ENCODE measurements at regions of chr1 and their contacts with region 1.

Region 1: DNA sequence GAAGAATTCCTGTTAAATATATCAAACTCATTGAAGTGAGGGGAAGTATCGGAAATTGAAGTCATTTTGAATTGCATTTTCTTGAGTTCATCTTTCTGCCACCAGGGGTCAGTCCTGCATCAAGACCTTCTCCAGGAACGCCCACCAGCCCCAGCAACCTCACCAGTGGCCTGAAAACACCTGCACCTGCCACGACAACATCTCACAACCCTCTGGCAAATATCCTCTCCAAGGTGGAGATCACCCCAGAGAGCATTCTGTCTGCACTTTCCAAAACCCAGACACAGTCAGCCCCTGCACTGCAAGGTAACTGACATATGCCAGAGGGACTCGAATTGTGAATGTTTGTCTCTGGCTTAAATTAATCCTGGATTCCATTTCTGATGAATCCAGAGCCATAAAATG is 22.8 kb upstream of the TARS2 start:
- DNase-seq: peak; percentile 42
- H3K4me3 ChIP-seq: no peak overlapping the region
- H3K27ac ChIP-seq: no peak overlapping the region
- H3K4me1 ChIP-seq: peaks cover 10% of the 10 kb centered on the region
- H3K27me3 ChIP-seq: no peaks in the 10 kb centered on the region
- CTCF ChIP-seq: peak; percentile 76 to 77

Region 2: GRCh38 chr1:150259758-150260669 is 204.4 kb before region 1 on chr1:
- CTCF ChIA-PET with region 1: no interaction called
- dilution Hi-C with region 1: no loop called
- in situ Hi-C with region 1: no loop called
- intact Hi-C with region 1: loop called (anchors 10 kb)
- DNase-seq: peak; percentile 56
- H3K4me3 ChIP-seq: peak overlapping the region in 2 of 3 experiments; percentile 2 to 11
- H3K27ac ChIP-seq: peak overlapping the region; percentile 19
- H3K4me1 ChIP-seq: peaks cover 45% of the 10 kb centered on the region
- H3K27me3 ChIP-seq: no peaks in the 10 kb centered on the region
- CTCF ChIP-seq: no peak

Region 3: DNA sequence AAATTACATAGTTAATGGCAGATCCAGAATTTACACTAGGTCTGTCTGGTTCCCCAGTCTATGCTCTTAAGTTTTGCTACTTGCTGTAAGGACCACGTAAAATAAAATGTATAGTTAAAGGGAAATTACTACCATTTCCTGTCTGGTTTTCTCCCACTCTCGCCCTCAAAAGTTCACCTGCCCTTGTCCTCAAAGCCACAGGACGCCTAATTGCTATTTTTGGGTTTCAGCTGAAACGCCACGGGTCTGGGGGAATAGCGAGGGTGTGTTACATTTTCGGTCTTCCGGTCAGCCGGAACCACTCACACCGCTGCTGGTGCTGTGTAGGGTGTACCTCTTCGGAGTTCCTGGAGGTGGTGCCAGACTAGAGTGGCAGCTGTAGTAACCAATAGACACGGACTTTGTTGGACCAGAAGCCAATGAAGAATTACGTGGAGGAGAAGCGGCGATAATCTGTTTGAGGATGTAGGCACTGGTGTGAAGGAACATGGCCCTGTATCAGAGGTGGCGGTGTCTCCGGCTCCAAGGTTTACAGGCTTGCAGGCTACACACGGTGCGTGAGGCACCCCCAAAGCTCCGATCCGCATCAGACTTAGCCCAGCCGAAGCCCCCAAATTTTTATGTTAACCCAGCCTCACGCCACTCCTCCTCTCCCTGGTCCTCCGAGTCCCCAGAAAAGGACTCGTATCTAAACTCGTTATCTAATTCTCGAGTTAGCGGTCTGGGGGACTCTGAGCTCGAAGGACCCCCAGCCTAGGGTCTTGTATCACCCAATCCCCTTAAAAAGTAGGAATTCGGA is 22.7 kb after region 1 on chr1 and contains the start of gene TARS2:
- CTCF ChIA-PET with region 1: no interaction called
- dilution Hi-C with region 1: no loop called
- in situ Hi-C with region 1: no loop called
- intact Hi-C with region 1: loop called (anchors 1 kb)
- DNase-seq: peak; percentile 97
- H3K4me3 ChIP-seq: peak within 1 kb of the TSS; percentile 66 to 81 (median 69)
- H3K27ac ChIP-seq: peak within 1 kb of the TSS; percentile 83
- H3K4me1 ChIP-seq: peaks cover 16% of the 10 kb centered on the region
- H3K27me3 ChIP-seq: no peaks in the 10 kb centered on the region
- CTCF ChIP-seq: peak in 1 of 2 donors; percentile 29
- total RNA-seq, gene TARS2: 23.3 to 27.0 TPM

Region 4: GRCh38 chr1:150995896-150996295 is 531.5 kb after region 1 on chr1:
- CTCF ChIA-PET with region 1: no interaction called
- dilution Hi-C with region 1: no loop called
- in situ Hi-C with region 1: no loop called
- intact Hi-C with region 1: loop called (anchors 5 kb)
- DNase-seq: no peak
- H3K4me3 ChIP-seq: no peak overlapping the region
- H3K27ac ChIP-seq: no peak overlapping the region
- H3K4me1 ChIP-seq: no peaks in the 10 kb centered on the region
- H3K27me3 ChIP-seq: no peaks in the 10 kb centered on the region
- CTCF ChIP-seq: peak; percentile 42 to 59

Region 5: GRCh38 chr1:151680812-151681211 is 1216.4 kb after region 1 on chr1:
- CTCF ChIA-PET with region 1: no interaction called
- dilution Hi-C with region 1: no loop called
- in situ Hi-C with region 1: no loop called
- intact Hi-C with region 1: no loop called
- DNase-seq: peak; percentile 78
- H3K4me3 ChIP-seq: peak overlapping the region in 1 of 3 experiments; percentile 10
- H3K27ac ChIP-seq: peak overlapping the region; percentile 85
- H3K4me1 ChIP-seq: peaks cover 17% of the 10 kb centered on the region
- H3K27me3 ChIP-seq: no peaks in the 10 kb centered on the region
- CTCF ChIP-seq: no peak

Measured in mammary epithelial cell (primary cell).